Activated T-helper 1 cell treated with anti-CD3 and anti-CD28 coated beads, Interleukin-12 subunit alpha, Interleukin-12 subunit beta, Interleukin-2, Interleukin-4 antibody, amounts not matched to agents 30 ng/mL and 10 ng/mL and 1 ng/mL, durations not matched to agents 14 hours and 24 hours and 36 hours (primary cell): ENCODE measurements at regions of chr18 and their contacts with region 1.

Region 1: DNA sequence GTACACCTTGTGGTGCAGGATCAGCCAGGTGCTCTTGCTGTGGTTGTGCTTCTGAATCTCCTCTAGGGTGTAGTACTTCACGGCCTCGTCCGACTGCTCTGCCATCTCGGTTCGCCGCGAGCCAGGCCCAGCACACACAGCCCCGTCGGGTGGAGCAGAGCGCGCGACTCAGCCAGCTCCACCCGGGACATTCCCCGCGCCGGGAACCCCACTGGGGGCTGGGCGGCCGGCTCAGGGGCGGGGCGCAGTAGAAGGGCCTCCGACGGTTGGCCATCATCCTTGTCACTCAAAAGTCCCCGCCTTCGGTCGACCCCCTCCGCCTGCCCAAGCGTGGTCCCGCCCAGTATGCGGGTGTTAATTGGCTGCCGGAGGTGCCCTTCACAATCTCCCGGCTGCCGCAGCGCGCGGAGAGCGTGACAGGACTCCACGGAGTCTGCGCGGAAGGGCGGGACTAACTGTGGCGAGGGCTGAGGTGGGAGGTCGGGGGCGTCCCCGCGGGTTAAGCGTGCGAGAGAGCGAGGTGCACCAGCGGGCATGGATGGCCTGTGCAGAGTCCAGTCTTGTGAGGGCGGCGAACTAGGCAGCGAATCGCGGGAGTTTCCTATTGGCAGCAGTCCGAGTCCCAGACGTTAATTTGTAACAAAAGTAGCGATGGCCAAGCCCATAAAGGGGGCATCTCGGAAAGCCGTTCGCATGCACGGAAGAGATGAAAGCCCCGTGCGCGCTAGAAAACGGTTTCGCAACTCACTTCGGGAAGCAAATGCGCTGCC is at the start of gene CYB5A:
- DNase-seq: peak; percentile 97
- H3K4me3 Mint-ChIP-seq: no peak within 1 kb of the TSS
- H3K27ac Mint-ChIP-seq: peak within 1 kb of the TSS; percentile 90
- H3K4me1 Mint-ChIP-seq: peaks cover 14% of the 10 kb centered on the region
- H3K27me3 Mint-ChIP-seq: peaks cover 17% of the 10 kb centered on the region
- total RNA-seq, gene CYB5A: 36.0 and 40.5 TPM in 2 replicates

Region 2: GRCh38 chr18:74196220-74197119 is 95.5 kb before region 1 on chr18:
- intact Hi-C with region 1: loop called (anchors 2 kb)
- DNase-seq: peak; percentile 17
- H3K4me3 Mint-ChIP-seq: peak overlapping the region; percentile 68
- H3K27ac Mint-ChIP-seq: no peak overlapping the region
- H3K4me1 Mint-ChIP-seq: peaks cover 7% of the 10 kb centered on the region
- H3K27me3 Mint-ChIP-seq: peaks cover 5% of the 10 kb centered on the region

Region 3: GRCh38 chr18:74251297-74252038 is 40.5 kb before region 1 on chr18:
- intact Hi-C with region 1: loop called (anchors 5 kb)
- DNase-seq: no peak
- H3K4me3 Mint-ChIP-seq: no peak overlapping the region
- H3K27ac Mint-ChIP-seq: no peak overlapping the region
- H3K4me1 Mint-ChIP-seq: peaks cover 19% of the 10 kb centered on the region
- H3K27me3 Mint-ChIP-seq: no peaks in the 10 kb centered on the region

Region 4: GRCh38 chr18:74342416-74343043 is 50.6 kb after region 1 on chr18:
- intact Hi-C with region 1: loop called (anchors 5 kb)
- DNase-seq: no peak
- H3K4me3 Mint-ChIP-seq: no peak overlapping the region
- H3K27ac Mint-ChIP-seq: no peak overlapping the region
- H3K4me1 Mint-ChIP-seq: no peaks in the 10 kb centered on the region
- H3K27me3 Mint-ChIP-seq: peaks cover 18% of the 10 kb centered on the region

Region 5: DNA sequence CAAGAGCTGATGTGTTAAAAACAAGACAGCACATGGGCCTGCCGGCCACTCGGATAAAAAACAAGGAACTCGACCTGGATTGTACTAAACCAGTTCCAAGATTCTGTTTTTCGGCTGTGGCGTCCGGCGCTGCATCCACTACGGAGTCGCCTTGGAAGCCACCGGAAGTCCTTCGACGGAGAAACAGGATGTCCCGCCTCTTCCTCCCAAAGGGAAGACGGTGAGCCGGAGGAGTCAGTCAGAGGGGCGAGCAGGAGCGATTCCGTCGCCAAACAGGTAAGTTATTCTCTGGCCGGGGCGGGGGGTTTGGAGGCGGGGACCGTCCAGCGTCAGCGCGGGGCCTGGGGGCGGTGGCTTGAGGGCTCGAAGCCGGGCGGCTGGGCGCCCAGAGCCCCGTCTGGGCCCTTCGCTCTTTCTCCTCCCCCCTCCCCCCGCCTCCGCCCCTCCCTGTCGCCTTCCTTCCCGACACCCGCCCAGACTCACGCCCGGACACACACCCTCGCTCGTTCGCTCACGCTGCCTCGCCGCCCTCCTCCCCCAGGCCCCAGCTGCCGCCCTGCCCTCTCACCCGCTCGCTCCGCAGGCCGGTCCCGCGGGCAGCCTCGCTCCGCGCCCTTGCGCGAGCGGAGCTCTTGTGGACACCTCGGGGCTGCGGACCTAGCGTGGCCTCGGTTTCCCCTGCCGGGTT is 305.9 kb after region 1 on chr18 and contains the start of gene ZNF407:
- intact Hi-C with region 1: loop called (anchors 1 kb)
- DNase-seq: peak; percentile 83
- H3K4me3 Mint-ChIP-seq: peak within 1 kb of the TSS; percentile 97
- H3K27ac Mint-ChIP-seq: peak within 1 kb of the TSS; percentile 96
- H3K4me1 Mint-ChIP-seq: peaks cover 45% of the 10 kb centered on the region
- H3K27me3 Mint-ChIP-seq: no peaks in the 10 kb centered on the region
- total RNA-seq, gene ZNF407: 19.8 and 21.4 TPM in 2 replicates